K562 (cell line): ENCODE measurements at regions of chr18 and their contacts with region 1.

Region 1: GRCh38 chr18:26648509-26649192 is 100.3 kb upstream of the KCTD1 start:
- DNase-seq: no peak
- ATAC-seq: no peak
- H3K4me3 ChIP-seq: no peak overlapping the region
- H3K27ac ChIP-seq: no peak overlapping the region
- H3K4me1 ChIP-seq: no peaks in the 10 kb centered on the region
- H3K27me3 ChIP-seq: no peaks in the 10 kb centered on the region
- CTCF ChIP-seq: no peak
- EP300 ChIP-seq: no peak
- POLR2A ChIP-seq: no peak
- RAD21 ChIP-seq: no peak

Region 2: GRCh38 chr18:26307189-26307773 is 341.4 kb before region 1 on chr18:
- CTCF ChIA-PET with region 1: interaction called, 5 read pairs
- POLR2A ChIA-PET with region 1: no interaction called
- in situ Hi-C with region 1: no loop called
- intact Hi-C with region 1: loop called (anchors 5 kb)
- DNase-seq: peak; percentile 44 to 68 (median 48)
- ATAC-seq: peak; percentile 92
- H3K4me3 ChIP-seq: no peak overlapping the region
- H3K27ac ChIP-seq: no peak overlapping the region
- H3K4me1 ChIP-seq: no peaks in the 10 kb centered on the region
- H3K27me3 ChIP-seq: no peaks in the 10 kb centered on the region
- CTCF ChIP-seq: peak; percentile 50 to 72 (median 61)
- EP300 ChIP-seq: no peak
- POLR2A ChIP-seq: no peak
- RAD21 ChIP-seq: peak; percentile 54 to 67

Region 3: DNA sequence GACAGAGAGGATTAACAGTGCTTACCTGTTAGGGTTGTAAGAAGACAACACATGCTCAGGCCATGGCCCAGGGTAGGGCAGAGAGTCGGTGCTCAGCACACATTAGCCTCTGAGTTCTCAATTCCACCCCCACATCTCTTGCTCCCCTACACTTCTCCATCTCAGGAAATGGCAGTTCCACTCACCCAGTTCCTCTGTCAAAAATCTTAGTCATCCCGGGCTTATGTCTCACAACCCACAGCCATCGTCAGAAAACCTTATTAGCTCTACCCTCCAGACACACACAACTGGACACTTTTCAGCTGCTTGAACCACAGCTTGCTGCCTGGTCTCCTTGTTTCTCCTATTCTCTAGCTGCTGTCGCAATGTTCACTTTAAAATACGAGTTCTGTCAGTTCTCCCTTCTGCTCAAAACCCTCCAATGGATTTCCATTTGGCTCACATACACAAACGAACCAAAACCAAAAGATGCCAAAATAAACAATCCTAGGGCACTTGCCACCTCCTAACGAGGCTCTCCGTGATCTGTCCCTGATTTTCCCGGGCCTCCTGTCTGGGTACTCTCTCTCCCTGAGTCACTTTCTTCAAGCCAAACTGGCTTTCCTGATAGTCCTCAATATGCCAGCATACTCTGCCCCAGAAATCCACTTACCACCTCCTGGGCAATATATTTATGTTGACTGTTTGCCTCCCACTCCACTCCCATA is 190.0 kb before region 1 on chr18:
- CTCF ChIA-PET with region 1: no interaction called
- POLR2A ChIA-PET with region 1: no interaction called
- in situ Hi-C with region 1: no loop called
- intact Hi-C with region 1: loop called (anchors 5 kb)
- DNase-seq: no peak
- ATAC-seq: peak; percentile 9; the same call in 2 of the 3 replicates
- H3K4me3 ChIP-seq: no peak overlapping the region
- H3K27ac ChIP-seq: no peak overlapping the region
- H3K4me1 ChIP-seq: peaks cover 0 to 3% of the 10 kb centered on the region in 2 experiments; a peak in 1 of 5 replicates
- H3K27me3 ChIP-seq: peaks cover 5 to 33% of the 10 kb centered on the region in 2 experiments; a peak in 2 of 5 replicates
- CTCF ChIP-seq: no peak
- EP300 ChIP-seq: no peak
- POLR2A ChIP-seq: no peak
- RAD21 ChIP-seq: no peak

Region 4: GRCh38 chr18:26621161-26622026 is 27.3 kb before region 1 on chr18:
- CTCF ChIA-PET with region 1: no interaction called
- POLR2A ChIA-PET with region 1: no interaction called
- in situ Hi-C with region 1: no loop called
- intact Hi-C with region 1: loop called (anchors 1 kb)
- DNase-seq: peak; percentile 43 to 53 (median 52)
- ATAC-seq: peak; percentile 94
- H3K4me3 ChIP-seq: no peak overlapping the region
- H3K27ac ChIP-seq: no peak overlapping the region
- H3K4me1 ChIP-seq: no peaks in the 10 kb centered on the region
- H3K27me3 ChIP-seq: no peaks in the 10 kb centered on the region
- CTCF ChIP-seq: peak; percentile 58 to 67 (median 59)
- EP300 ChIP-seq: no peak
- POLR2A ChIP-seq: no peak
- RAD21 ChIP-seq: peak; percentile 28 to 61; a peak in 3 of 4 replicates